PC-9 (cell line): ENCODE measurements at regions of chr9 and their contacts with region 1.

Region 1: GRCh38 chr9:137302176-137302994 is at the start of gene NRARP:
- DNase-seq: peak; percentile 63 to 95
- H3K4me3 ChIP-seq: peak within 1 kb of the TSS; percentile 98
- H3K27ac ChIP-seq: peak within 1 kb of the TSS; percentile 75
- H3K4me1 ChIP-seq: peaks cover 20% of the 10 kb centered on the region
- H3K27me3 ChIP-seq: no peaks in the 10 kb centered on the region
- CTCF ChIP-seq: peak; percentile 65; the same call in 1 of the 2 replicates
- total RNA-seq, gene NRARP: 20.6 and 25.8 TPM in 2 replicates

Region 2: GRCh38 chr9:136109351-136110081 is 1192.9 kb before region 1 on chr9:
- CTCF ChIA-PET with region 1: no interaction called
- POLR2A ChIA-PET with region 1: interaction called, 18 read pairs
- intact Hi-C with region 1: no loop called
- DNase-seq: peak; percentile 73 to 99
- H3K4me3 ChIP-seq: peak overlapping the region; percentile 45; the same call in 1 of the 2 replicates
- H3K27ac ChIP-seq: no peak overlapping the region
- H3K4me1 ChIP-seq: peaks cover 7% of the 10 kb centered on the region; the same call in 1 of the 2 replicates
- H3K27me3 ChIP-seq: peaks cover 15% of the 10 kb centered on the region; the same call in 1 of the 2 replicates
- CTCF ChIP-seq: no peak

Region 3: GRCh38 chr9:137316012-137316976 is 13.9 kb after region 1 on chr9:
- CTCF ChIA-PET with region 1: interaction called, 10 read pairs
- POLR2A ChIA-PET with region 1: interaction called, 12 read pairs
- intact Hi-C with region 1: no loop called
- DNase-seq: peak in 1 of 2 experiments; percentile 71
- H3K4me3 ChIP-seq: peak overlapping the region; percentile 53; the same call in 1 of the 2 replicates
- H3K27ac ChIP-seq: no peak overlapping the region
- H3K4me1 ChIP-seq: peaks cover 34% of the 10 kb centered on the region
- H3K27me3 ChIP-seq: no peaks in the 10 kb centered on the region
- CTCF ChIP-seq: no peak

Region 4: DNA sequence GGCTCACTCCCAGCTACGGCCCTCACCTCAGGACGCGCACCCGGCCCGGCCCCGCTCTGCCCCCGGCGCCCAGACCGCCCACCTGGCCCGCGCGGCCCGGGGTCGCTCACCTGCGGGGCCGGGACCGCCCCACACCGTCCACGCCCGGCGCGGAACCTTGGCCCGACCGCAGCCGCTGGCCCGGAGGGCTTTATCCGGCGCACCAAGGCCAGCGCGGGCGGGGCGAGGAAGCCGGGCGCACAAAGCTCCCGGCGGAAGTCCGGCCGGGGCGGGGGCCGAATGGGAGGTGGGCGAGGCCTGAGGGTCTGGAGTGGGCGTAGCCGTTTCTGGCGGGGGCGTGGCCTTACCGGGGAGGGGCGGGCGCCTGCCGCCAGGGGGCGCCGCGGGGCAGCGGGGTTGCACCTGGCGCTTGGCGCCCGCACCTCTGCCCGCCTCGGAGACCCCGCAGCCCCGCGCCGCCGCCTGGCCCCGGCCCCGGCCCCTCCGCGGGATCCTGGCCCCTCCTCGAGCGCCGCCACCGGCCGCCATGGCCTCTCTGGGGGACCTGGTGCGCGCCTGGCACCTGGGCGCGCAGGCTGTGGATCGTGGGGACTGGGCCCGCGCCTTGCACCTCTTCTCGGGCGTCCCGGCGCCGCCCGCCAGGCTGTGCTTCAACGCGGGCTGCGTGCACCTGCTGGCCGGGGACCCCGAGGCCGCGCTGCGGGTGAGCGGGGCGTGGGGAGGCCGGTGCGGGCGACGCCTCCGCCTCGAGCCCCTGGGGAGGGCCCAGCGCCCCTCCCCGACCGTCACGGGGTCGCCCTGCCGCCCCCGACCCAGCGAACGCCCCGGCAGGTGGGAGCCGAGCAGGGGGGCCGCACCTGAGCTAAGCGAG is 120.9 kb after region 1 on chr9 and contains the starts of genes EXD3 and NOXA1:
- CTCF ChIA-PET with region 1: no interaction called
- POLR2A ChIA-PET with region 1: interaction called, 6 read pairs
- intact Hi-C with region 1: loop called (anchors 2 kb)
- DNase-seq: peak; percentile 72 to 97
- H3K4me3 ChIP-seq: peak within 1 kb of the TSS; percentile 92
- H3K27ac ChIP-seq: peak within 1 kb of the TSS; percentile 83
- H3K4me1 ChIP-seq: peaks cover 17% of the 10 kb centered on the region
- H3K27me3 ChIP-seq: no peaks in the 10 kb centered on the region
- CTCF ChIP-seq: peak; percentile 63
- total RNA-seq, gene EXD3: 23.7 and 38.5 TPM in 2 replicates
- total RNA-seq, gene NOXA1: 10.5 and 22.8 TPM in 2 replicates

Region 5: GRCh38 chr9:137723783-137724445 is 421.5 kb after region 1 on chr9:
- CTCF ChIA-PET with region 1: no interaction called
- POLR2A ChIA-PET with region 1: no interaction called
- intact Hi-C with region 1: no loop called
- DNase-seq: no peak
- H3K4me3 ChIP-seq: no peak overlapping the region
- H3K27ac ChIP-seq: no peak overlapping the region
- H3K4me1 ChIP-seq: no peaks in the 10 kb centered on the region
- H3K27me3 ChIP-seq: no peaks in the 10 kb centered on the region
- CTCF ChIP-seq: no peak